B cell (primary cell): ENCODE measurements at regions of chr5 and their contacts with region 1.

Region 1: GRCh38 chr5:148730943-148731861 is 76.9 kb upstream of the HTR4 start:
- DNase-seq: peak; percentile 80
- ATAC-seq: peak; percentile 92
- H3K4me3 ChIP-seq: peak overlapping the region in 4 of 5 experiments; percentile 0 to 39 (median 24)
- H3K4me3 Mint-ChIP-seq: peak overlapping the region; percentile 76
- H3K27ac ChIP-seq: no peak overlapping the region
- H3K27ac Mint-ChIP-seq: no peak overlapping the region
- H3K4me1 ChIP-seq: no peaks in the 10 kb centered on the region
- H3K4me1 Mint-ChIP-seq: peaks cover 11% of the 10 kb centered on the region
- H3K27me3 ChIP-seq: no peaks in the 10 kb centered on the region
- H3K27me3 Mint-ChIP-seq: peaks cover 10% of the 10 kb centered on the region
- CTCF ChIP-seq: peak; percentile 98

Region 2: DNA sequence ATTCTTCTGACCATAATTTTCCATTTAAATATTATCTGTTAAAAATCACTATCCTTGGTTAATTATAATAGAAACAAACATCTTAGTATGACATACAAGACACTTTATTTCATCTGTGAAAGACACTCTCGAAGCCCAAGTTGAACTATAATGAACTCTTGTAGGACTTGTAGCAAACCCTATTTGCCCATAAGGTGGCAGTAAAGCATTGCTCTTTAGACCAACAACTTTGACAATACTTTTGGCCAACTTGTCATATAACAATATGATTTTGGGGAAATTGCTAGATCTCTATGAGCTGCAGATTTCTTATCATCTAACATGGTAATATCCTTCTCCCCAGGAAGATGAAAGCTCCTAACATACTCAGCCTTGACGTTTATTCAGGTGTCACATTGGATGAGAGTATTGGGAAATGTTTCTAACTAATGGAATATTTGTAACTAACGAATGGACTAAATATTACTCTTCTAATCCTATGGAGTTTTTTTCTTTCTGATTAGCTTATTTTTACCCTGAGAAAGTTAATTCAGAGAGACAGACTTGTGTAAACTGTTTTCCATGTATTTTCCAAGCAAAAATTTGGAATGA is 551.9 kb before region 1 on chr5:
- CTCF ChIA-PET with region 1: interaction called, 10 read pairs
- POLR2A ChIA-PET with region 1: no interaction called
- intact Hi-C with region 1: no loop called
- DNase-seq: peak; percentile 54
- ATAC-seq: no peak
- H3K4me3 ChIP-seq: no peak overlapping the region
- H3K4me3 Mint-ChIP-seq: no peak overlapping the region
- H3K27ac ChIP-seq: no peak overlapping the region
- H3K27ac Mint-ChIP-seq: no peak overlapping the region
- H3K4me1 ChIP-seq: no peaks in the 10 kb centered on the region
- H3K4me1 Mint-ChIP-seq: no peaks in the 10 kb centered on the region
- H3K27me3 ChIP-seq: no peaks in the 10 kb centered on the region
- H3K27me3 Mint-ChIP-seq: peaks cover 12% of the 10 kb centered on the region
- CTCF ChIP-seq: peak; percentile 70

Region 3: DNA sequence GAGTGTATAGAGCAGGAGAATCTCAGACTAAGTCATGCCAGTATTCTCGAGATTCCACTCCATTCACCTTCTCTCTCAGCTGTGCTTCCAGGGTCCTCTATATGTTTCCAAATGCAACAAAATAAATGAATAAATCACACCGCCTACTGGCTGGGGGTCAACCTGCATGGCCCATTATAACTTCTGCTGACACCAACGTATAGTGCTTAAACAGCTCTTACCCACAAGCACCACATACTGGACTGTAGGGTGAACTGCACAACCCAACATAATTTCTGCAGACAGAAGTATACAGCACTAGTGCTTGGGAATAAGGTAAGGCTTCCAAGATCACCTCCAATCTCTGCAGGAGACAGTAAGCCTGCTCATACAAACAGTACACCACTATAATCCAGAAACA is 43.8 kb before region 1 on chr5:
- CTCF ChIA-PET with region 1: no interaction called
- POLR2A ChIA-PET with region 1: no interaction called
- intact Hi-C with region 1: no loop called
- DNase-seq: no peak
- ATAC-seq: no peak
- H3K4me3 ChIP-seq: no peak overlapping the region
- H3K4me3 Mint-ChIP-seq: no peak overlapping the region
- H3K27ac ChIP-seq: no peak overlapping the region
- H3K27ac Mint-ChIP-seq: no peak overlapping the region
- H3K4me1 ChIP-seq: no peaks in the 10 kb centered on the region
- H3K4me1 Mint-ChIP-seq: no peaks in the 10 kb centered on the region
- H3K27me3 ChIP-seq: peaks cover 0 to 2% (median 0%) of the 10 kb centered on the region in 4 experiments
- H3K27me3 Mint-ChIP-seq: peaks cover 30% of the 10 kb centered on the region
- CTCF ChIP-seq: no peak

Region 4: GRCh38 chr5:148699028-148699427 is 32.2 kb before region 1 on chr5:
- CTCF ChIA-PET with region 1: no interaction called
- POLR2A ChIA-PET with region 1: no interaction called
- intact Hi-C with region 1: no loop called
- DNase-seq: no peak
- ATAC-seq: no peak
- H3K4me3 ChIP-seq: no peak overlapping the region
- H3K4me3 Mint-ChIP-seq: no peak overlapping the region
- H3K27ac ChIP-seq: no peak overlapping the region
- H3K27ac Mint-ChIP-seq: no peak overlapping the region
- H3K4me1 ChIP-seq: no peaks in the 10 kb centered on the region
- H3K4me1 Mint-ChIP-seq: no peaks in the 10 kb centered on the region
- H3K27me3 ChIP-seq: peaks cover 0 to 3% (median 0%) of the 10 kb centered on the region in 4 experiments
- H3K27me3 Mint-ChIP-seq: peaks cover 18% of the 10 kb centered on the region
- CTCF ChIP-seq: no peak

Region 5: GRCh38 chr5:148719605-148720004 is 11.6 kb before region 1 on chr5:
- CTCF ChIA-PET with region 1: interaction called, 22 read pairs
- POLR2A ChIA-PET with region 1: no interaction called
- intact Hi-C with region 1: no loop called
- DNase-seq: no peak
- ATAC-seq: no peak
- H3K4me3 ChIP-seq: no peak overlapping the region
- H3K4me3 Mint-ChIP-seq: no peak overlapping the region
- H3K27ac ChIP-seq: no peak overlapping the region
- H3K27ac Mint-ChIP-seq: no peak overlapping the region
- H3K4me1 ChIP-seq: no peaks in the 10 kb centered on the region
- H3K4me1 Mint-ChIP-seq: no peaks in the 10 kb centered on the region
- H3K27me3 ChIP-seq: peaks cover 0 to 4% (median 1%) of the 10 kb centered on the region in 4 experiments
- H3K27me3 Mint-ChIP-seq: peaks cover 36% of the 10 kb centered on the region
- CTCF ChIP-seq: no peak

Region 6: DNA sequence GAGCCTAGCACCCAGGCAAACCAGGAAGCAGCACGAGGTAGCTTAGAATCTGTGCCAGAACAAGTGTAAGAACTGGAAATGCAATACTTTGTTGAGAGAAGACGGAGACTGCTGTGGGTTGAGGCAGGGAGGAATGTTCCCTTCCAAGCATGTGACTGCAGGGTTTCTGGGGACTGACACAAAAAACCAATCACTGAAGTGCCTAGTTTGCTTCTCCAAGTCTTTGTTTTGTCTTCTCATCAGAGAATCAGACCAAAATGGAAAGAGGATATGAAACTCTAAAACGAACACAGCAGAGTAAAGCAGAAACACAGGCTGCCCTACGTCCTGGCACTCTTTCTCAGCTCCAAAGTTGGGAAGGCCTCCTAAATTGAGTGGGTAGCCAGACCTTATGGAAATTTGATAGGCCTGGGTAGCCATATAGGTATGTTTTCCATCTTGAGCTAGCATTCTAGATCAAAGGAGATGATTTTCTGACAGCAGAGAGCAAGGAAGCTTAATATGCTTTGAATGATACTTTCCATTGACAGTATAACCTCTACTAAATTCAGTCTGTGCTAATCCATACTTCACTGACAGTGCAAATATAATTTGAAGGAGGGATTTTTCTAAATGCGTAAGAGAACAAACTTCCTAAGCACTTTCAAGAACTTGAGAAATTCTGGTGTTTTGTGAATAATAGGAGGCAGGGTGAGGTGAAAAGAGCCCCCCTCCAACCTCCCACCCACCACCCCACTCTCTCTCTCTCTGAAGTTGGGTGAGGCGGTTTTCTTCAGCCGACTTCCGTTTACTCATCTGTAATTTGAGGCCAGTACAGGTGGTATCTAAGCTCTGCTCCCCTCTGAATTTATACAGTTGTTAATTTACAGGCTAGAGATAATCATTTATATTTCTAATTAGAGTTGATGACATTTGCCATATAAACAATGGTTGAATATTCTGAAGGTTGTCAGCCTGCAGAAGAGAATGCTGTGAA is 100.7 kb after region 1 on chr5:
- CTCF ChIA-PET with region 1: interaction called, 27 read pairs
- POLR2A ChIA-PET with region 1: no interaction called
- intact Hi-C with region 1: no loop called
- DNase-seq: peak; percentile 78
- ATAC-seq: peak; percentile 77
- H3K4me3 ChIP-seq: peak overlapping the region in 4 of 5 experiments; percentile 33 to 53 (median 45)
- H3K4me3 Mint-ChIP-seq: peak overlapping the region; percentile 94
- H3K27ac ChIP-seq: peak overlapping the region; percentile 77 to 78
- H3K27ac Mint-ChIP-seq: peak overlapping the region; percentile 98
- H3K4me1 ChIP-seq: peaks cover 97% of the 10 kb centered on the region in 2 donors
- H3K4me1 Mint-ChIP-seq: peaks cover 94% of the 10 kb centered on the region
- H3K27me3 ChIP-seq: no peaks in the 10 kb centered on the region
- H3K27me3 Mint-ChIP-seq: no peaks in the 10 kb centered on the region
- CTCF ChIP-seq: no peak

Region 7: DNA sequence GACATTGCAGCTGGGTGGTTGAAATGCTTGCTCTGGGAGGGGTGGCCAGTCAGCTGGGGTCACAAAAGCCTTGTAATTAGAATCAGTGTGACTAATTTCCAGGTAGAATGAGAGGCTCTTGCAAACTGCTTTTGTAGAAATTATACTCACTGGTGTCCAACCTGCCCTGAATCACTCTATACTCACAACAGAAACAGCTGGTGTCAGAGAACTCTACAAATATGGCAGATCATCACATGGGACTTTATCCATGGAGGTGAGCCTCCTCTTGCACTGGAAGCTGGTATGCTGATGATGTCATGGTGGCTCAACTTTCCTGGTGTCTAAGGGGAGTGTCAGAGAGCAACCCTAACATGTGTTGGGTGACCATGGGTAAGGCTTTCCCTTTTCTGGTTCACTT is 260.4 kb after region 1 on chr5:
- CTCF ChIA-PET with region 1: interaction called, 172 read pairs
- POLR2A ChIA-PET with region 1: no interaction called
- intact Hi-C with region 1: no loop called
- DNase-seq: no peak
- ATAC-seq: no peak
- H3K4me3 ChIP-seq: no peak overlapping the region
- H3K4me3 Mint-ChIP-seq: no peak overlapping the region
- H3K27ac ChIP-seq: no peak overlapping the region
- H3K27ac Mint-ChIP-seq: no peak overlapping the region
- H3K4me1 ChIP-seq: no peaks in the 10 kb centered on the region
- H3K4me1 Mint-ChIP-seq: no peaks in the 10 kb centered on the region
- H3K27me3 ChIP-seq: peaks cover 0 to 4% (median 0%) of the 10 kb centered on the region in 4 experiments
- H3K27me3 Mint-ChIP-seq: peaks cover 38% of the 10 kb centered on the region
- CTCF ChIP-seq: no peak

Region 8: DNA sequence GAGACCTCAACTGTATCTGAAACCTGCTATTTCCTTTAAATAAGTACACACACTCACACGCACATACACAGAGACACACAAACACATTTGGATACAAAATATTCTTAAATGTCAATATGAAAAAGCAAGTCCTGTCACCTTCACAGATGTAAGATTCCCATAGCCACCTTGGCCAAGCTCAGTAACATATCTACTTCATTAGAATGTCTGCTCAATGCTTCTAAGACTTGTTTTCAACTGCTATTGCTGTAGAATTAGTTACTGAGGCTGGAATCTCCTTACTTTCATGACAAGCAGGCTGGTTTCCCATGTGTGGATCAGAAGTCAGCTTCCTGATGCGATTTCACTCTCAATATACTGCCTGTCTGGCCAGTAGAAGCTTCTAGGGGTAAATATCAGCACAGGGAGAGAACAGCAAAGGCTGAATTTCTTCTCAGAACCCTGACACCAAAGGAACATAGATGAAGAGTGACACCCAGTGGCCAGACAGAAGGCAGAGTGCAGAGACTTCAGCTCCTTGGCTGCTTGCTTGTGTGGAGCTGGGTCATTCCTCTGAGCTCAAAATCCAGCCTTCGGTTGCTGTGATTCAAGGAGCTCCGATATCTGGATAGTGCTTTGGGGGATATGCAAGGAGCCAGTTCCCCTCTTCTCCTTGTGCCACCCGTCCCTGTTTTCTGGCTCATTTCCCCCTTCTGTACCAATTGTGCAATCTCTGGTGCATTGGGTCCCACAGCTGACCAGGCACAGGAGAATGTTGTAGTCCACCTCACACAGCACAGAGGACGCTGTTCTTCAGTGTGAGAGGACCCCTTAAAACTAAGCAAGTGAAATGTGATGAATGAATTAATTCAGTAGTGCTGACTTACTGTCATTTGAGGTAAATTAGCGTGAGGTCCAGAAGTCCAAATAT is 383.5 kb after region 1 on chr5:
- CTCF ChIA-PET with region 1: interaction called, 33 read pairs
- POLR2A ChIA-PET with region 1: no interaction called
- intact Hi-C with region 1: no loop called
- DNase-seq: peak; percentile 21
- ATAC-seq: no peak
- H3K4me3 ChIP-seq: no peak overlapping the region
- H3K4me3 Mint-ChIP-seq: no peak overlapping the region
- H3K27ac ChIP-seq: no peak overlapping the region
- H3K27ac Mint-ChIP-seq: no peak overlapping the region
- H3K4me1 ChIP-seq: no peaks in the 10 kb centered on the region
- H3K4me1 Mint-ChIP-seq: no peaks in the 10 kb centered on the region
- H3K27me3 ChIP-seq: no peaks in the 10 kb centered on the region
- H3K27me3 Mint-ChIP-seq: peaks cover 31% of the 10 kb centered on the region
- CTCF ChIP-seq: peak; percentile 44